SK-N-SH (cell line): ENCODE measurements at regions of chr2 and their contacts with region 1.

Region 1: DNA sequence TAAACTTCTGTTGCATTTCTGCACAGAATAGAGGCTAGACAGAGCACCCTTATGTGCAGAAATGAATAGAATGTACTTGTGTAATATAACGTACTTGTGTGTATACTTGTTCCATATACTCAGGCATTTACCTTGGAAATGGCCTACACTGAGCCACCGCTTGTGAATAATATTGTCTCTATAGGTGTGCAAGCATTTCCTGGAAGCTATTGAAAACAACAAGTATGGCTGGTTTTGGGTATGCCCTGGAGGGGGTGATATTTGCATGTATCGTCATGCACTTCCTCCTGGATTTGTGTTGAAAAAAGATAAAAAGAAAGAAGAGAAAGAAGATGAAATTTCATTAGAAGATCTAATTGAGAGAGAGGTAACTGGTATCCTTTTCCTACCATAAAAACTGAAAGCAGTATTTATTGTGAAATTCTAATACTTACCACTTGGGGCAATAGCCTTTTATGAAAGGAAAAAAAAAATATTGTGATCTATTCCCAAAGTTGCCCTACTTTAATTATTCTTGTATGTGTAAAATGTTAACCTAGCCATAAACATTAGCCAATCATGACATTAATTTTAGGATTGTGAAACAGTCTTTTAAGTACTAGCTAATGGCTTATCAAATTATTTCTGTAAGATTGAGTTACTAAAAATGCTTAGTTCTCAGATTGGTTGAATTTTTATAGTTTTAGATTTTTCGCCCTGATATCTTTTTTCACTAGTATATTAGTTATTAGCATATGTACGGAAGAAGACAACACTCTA is 18.0 kb downstream of the ZC3H15 start:
- DNase-seq: peak; percentile 29
- H3K4me3 ChIP-seq: no peak overlapping the region; a peak in 1 of 4 replicates
- H3K27ac ChIP-seq: peak overlapping the region in 1 of 2 experiments; percentile 6; a peak in 2 of 4 replicates
- H3K4me1 ChIP-seq: no peaks in the 10 kb centered on the region
- H3K27me3 ChIP-seq: no peaks in the 10 kb centered on the region
- CTCF ChIP-seq: peak; percentile 79
- EP300 ChIP-seq: no peak
- RAD21 ChIP-seq: peak; percentile 68

Region 2: GRCh38 chr2:186379052-186379451 is 125.0 kb before region 1 on chr2:
- CTCF ChIA-PET with region 1: no interaction called
- POLR2A ChIA-PET with region 1: no interaction called
- DNase-seq: no peak
- H3K4me3 ChIP-seq: no peak overlapping the region
- H3K27ac ChIP-seq: no peak overlapping the region
- H3K4me1 ChIP-seq: no peaks in the 10 kb centered on the region
- H3K27me3 ChIP-seq: no peaks in the 10 kb centered on the region
- CTCF ChIP-seq: no peak
- EP300 ChIP-seq: no peak
- RAD21 ChIP-seq: no peak

Region 3: GRCh38 chr2:186485871-186486650 is 18.0 kb before region 1 on chr2 and contains the start of gene ZC3H15:
- CTCF ChIA-PET with region 1: interaction called, 12 read pairs
- POLR2A ChIA-PET with region 1: interaction called, 5 read pairs
- DNase-seq: peak; percentile 94
- H3K4me3 ChIP-seq: peak within 1 kb of the TSS; percentile 94 to 99
- H3K27ac ChIP-seq: peak within 1 kb of the TSS; percentile 92 to 97
- H3K4me1 ChIP-seq: peaks cover 9 to 10% of the 10 kb centered on the region in 2 experiments; a peak in 3 of 4 replicates
- H3K27me3 ChIP-seq: no peaks in the 10 kb centered on the region
- CTCF ChIP-seq: no peak
- EP300 ChIP-seq: peak in 1 of 2 experiments; percentile 13; a peak in 1 of 4 replicates
- RAD21 ChIP-seq: peak; percentile 6; the same call in 1 of the 2 replicates
- polyA plus RNA-seq, gene ZC3H15: 26.5 and 27.7 TPM in 2 replicates

Region 4: GRCh38 chr2:186518945-186519344 is 14.9 kb after region 1 on chr2:
- CTCF ChIA-PET with region 1: interaction called, 29 read pairs
- POLR2A ChIA-PET with region 1: no interaction called
- DNase-seq: no peak
- H3K4me3 ChIP-seq: no peak overlapping the region
- H3K27ac ChIP-seq: no peak overlapping the region
- H3K4me1 ChIP-seq: peaks cover 5 to 8% of the 10 kb centered on the region in 2 experiments; a peak in 2 of 4 replicates
- H3K27me3 ChIP-seq: no peaks in the 10 kb centered on the region
- CTCF ChIP-seq: no peak
- EP300 ChIP-seq: no peak
- RAD21 ChIP-seq: no peak

Region 5: DNA sequence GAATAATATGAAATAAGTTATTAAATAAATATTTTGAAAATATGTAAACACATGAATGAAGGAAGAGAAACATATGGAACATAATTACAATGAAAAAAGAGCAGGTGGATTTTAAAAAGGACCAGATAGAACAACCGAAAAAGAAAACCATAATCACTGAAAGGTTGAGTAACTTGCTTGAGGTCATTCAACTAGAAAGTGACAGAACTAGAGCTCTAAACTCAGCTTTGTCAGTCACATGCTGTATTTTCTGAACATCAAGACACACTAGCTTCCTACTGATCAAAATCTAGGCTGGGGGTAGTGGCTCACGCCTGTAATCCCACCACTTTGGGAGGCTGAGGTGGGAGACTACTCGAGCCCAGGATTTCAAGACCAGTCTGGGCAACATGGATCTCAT is 55.8 kb after region 1 on chr2:
- CTCF ChIA-PET with region 1: no interaction called
- POLR2A ChIA-PET with region 1: no interaction called
- DNase-seq: no peak
- H3K4me3 ChIP-seq: no peak overlapping the region
- H3K27ac ChIP-seq: no peak overlapping the region
- H3K4me1 ChIP-seq: peaks cover 0 to 5% of the 10 kb centered on the region in 2 experiments; a peak in 2 of 4 replicates
- H3K27me3 ChIP-seq: no peaks in the 10 kb centered on the region
- CTCF ChIP-seq: no peak
- EP300 ChIP-seq: no peak
- RAD21 ChIP-seq: no peak